CD8-positive, alpha-beta T cell (primary cell): ENCODE measurements at regions of chr22 and their contacts with region 1.

Region 1: DNA sequence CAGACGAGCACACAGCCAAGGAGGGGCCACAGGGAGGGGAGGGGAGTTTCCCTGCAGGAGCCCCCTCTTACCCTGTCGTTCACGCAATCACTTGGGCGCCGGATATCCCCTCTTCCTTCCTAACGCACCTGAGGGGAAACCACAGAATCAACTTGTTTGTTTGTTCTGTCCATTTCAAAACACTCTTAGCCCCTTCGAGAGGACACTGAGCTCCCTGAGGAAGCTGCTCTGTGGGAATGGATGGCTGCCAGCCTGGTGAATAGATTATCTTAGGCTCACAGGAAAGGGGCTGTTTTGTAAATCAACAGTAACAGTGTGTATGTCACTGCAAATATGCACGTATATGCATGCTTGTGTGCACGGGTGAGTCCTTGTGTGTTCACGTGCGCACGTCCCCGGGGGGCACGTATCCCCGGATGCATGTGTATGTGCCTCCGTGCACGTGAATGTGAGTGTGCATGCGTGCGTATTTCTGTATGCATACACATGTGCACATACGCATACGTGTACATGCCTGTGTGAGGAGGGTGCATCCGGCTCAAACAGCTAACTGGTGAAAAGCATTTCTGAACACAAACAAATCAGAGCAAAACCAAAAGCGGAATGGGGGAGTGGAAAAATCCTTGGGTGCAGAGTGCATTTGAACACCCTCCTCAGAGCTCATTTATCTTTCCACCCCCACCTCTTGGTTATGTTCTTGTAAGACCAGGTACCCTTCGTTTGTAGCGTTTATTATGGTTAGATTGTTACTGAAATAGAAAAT is 7.2 kb downstream of the ARSA start:
- DNase-seq: peak; percentile 80 to 97 (median 91)
- ATAC-seq: peak; percentile 72
- H3K4me3 ChIP-seq: peak overlapping the region; percentile 41 to 50
- H3K4me3 Mint-ChIP-seq: peak overlapping the region; percentile 82
- H3K27ac ChIP-seq: peak overlapping the region; percentile 91
- H3K27ac Mint-ChIP-seq: peak overlapping the region; percentile 100
- H3K4me1 ChIP-seq: peaks cover 28% of the 10 kb centered on the region
- H3K4me1 Mint-ChIP-seq: peaks cover 34% of the 10 kb centered on the region
- H3K27me3 ChIP-seq: no peaks in the 10 kb centered on the region
- H3K27me3 Mint-ChIP-seq: no peaks in the 10 kb centered on the region
- CTCF ChIP-seq: no peak

Region 2: DNA sequence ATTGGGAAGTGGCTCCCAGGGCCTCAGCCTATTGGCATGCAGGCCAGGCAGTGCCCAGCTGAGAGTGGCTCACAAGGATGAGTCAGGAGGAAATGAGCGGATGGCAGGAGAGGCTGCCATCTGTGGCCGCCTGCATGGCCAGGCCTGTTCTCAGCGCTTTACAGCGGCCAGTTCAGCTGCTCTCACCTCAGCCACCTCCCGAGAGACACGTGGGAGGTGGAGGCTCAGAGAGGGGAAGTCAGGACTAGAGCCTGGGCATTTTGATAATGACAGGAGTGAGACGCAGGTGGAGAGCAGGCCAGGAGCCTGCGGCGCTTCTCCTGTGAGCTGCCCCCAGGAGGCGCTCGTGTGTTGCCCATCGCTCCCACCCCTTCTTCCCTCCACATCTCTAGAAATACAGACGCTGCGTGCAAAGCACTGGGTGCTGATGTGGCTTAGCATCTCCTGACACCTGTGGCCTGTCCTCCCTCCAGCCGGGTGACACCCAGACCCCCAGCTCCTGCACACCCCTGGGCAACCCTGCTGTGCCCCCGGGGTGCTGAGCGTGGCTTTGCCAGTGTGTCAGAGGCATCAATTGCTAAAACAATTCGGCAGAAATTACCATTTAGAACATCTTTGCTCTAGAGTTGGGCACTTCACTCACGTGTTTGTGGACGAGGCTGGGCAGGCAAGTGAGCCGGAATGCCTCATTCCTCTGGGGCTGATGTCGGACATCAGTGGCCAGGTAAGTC is 471.6 kb before region 1 on chr22:
- CTCF ChIA-PET with region 1: no interaction called
- POLR2A ChIA-PET with region 1: no interaction called
- intact Hi-C with region 1: loop called in 1 of 2 experiments (anchors 2 kb)
- DNase-seq: peak; percentile 59 to 87 (median 74)
- ATAC-seq: peak; percentile 99
- H3K4me3 ChIP-seq: no peak overlapping the region
- H3K4me3 Mint-ChIP-seq: no peak overlapping the region
- H3K27ac ChIP-seq: no peak overlapping the region
- H3K27ac Mint-ChIP-seq: no peak overlapping the region
- H3K4me1 ChIP-seq: no peaks in the 10 kb centered on the region
- H3K4me1 Mint-ChIP-seq: peaks cover 4% of the 10 kb centered on the region
- H3K27me3 ChIP-seq: no peaks in the 10 kb centered on the region
- H3K27me3 Mint-ChIP-seq: no peaks in the 10 kb centered on the region
- CTCF ChIP-seq: peak; percentile 82

Region 3: GRCh38 chr22:50244420-50245213 is 376.2 kb before region 1 on chr22 and contains the start of gene TUBGCP6:
- CTCF ChIA-PET with region 1: interaction called, 9 read pairs
- POLR2A ChIA-PET with region 1: interaction called, 13 read pairs
- intact Hi-C with region 1: loop called (anchors 1 to 2 kb)
- DNase-seq: peak; percentile 77 to 96 (median 91)
- ATAC-seq: peak; percentile 77
- H3K4me3 ChIP-seq: peak within 1 kb of the TSS; percentile 99
- H3K4me3 Mint-ChIP-seq: peak within 1 kb of the TSS; percentile 100
- H3K27ac ChIP-seq: peak within 1 kb of the TSS; percentile 94 to 99
- H3K27ac Mint-ChIP-seq: peak within 1 kb of the TSS; percentile 100
- H3K4me1 ChIP-seq: peaks cover 56% of the 10 kb centered on the region
- H3K4me1 Mint-ChIP-seq: peaks cover 51% of the 10 kb centered on the region
- H3K27me3 ChIP-seq: no peaks in the 10 kb centered on the region
- H3K27me3 Mint-ChIP-seq: no peaks in the 10 kb centered on the region
- CTCF ChIP-seq: peak; percentile 27
- total RNA-seq, gene TUBGCP6: 121 to 122 TPM

Region 4: DNA sequence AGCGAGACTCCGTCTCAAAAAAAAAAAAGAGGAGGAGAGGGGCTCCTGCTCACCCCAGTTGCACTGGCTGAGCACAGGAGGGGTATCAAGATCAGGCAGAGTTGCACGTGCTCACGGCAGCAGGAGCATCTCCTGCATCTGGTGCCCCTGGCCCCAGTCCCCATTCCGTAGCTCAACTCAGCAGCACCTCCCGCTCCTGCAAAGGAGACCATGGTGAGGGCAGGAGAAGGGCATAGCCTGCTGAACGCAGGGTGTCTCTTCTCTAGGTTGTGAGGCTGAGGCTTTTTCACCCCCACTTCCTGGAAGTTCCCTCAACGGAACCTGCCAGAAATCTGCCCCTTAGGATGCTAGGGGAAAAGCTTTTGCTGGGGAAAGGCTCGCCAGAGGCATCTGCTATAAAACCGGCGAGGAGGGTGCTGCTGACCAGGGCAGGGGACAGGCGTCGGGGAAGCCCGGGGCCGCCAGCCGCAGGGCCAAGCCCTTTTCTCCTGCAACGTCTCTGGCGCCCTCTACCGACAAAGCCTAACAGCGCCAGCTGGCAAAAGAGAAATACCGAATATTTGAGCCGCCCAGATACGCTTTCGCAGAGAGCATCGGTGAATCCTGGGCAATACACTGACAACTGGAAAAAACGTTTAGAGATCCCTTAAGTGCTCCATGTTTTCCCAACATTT is 278.7 kb before region 1 on chr22:
- CTCF ChIA-PET with region 1: no interaction called
- POLR2A ChIA-PET with region 1: no interaction called
- intact Hi-C with region 1: loop called (anchors 1 to 2 kb)
- DNase-seq: peak; percentile 78 to 92 (median 88)
- ATAC-seq: peak; percentile 49
- H3K4me3 ChIP-seq: peak overlapping the region; percentile 59 to 60
- H3K4me3 Mint-ChIP-seq: peak overlapping the region; percentile 84
- H3K27ac ChIP-seq: peak overlapping the region; percentile 62 to 77
- H3K27ac Mint-ChIP-seq: peak overlapping the region; percentile 92
- H3K4me1 ChIP-seq: peaks cover 23% of the 10 kb centered on the region
- H3K4me1 Mint-ChIP-seq: peaks cover 12% of the 10 kb centered on the region
- H3K27me3 ChIP-seq: peaks cover 0 to 8% of the 10 kb centered on the region in 2 experiments
- H3K27me3 Mint-ChIP-seq: no peaks in the 10 kb centered on the region
- CTCF ChIP-seq: peak; percentile 88

Region 5: DNA sequence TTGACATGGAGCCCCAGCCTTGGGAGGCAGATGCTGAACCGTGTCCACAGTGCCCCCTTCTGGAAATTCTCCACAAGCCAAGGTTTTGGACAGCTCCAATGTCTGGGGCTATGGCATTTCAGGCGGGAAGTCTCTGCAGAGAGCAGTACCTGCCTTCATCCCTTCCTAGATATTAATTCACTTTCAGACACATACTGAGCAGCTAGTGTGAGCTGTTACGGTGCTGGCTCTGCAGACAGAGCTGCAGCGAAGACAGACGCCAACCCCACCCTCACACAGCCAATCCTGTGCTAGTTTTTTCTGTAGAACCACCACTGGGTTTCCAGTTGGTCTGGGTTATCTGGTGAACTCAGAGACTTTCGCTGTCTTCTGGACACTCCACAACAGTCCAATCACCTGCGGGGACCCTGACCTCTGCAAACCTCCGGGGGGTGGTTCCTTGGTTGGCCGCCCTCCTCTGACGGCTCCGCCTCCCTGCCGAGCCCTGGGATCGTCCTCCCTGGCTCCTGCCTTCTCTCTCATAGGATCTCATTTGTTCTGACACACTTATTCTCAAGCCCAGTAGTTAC is 122.4 kb before region 1 on chr22:
- CTCF ChIA-PET with region 1: interaction called, 10 read pairs
- POLR2A ChIA-PET with region 1: no interaction called
- intact Hi-C with region 1: no loop called
- DNase-seq: peak; percentile 41 to 84 (median 76)
- ATAC-seq: peak; percentile 99
- H3K4me3 ChIP-seq: no peak overlapping the region
- H3K4me3 Mint-ChIP-seq: no peak overlapping the region
- H3K27ac ChIP-seq: no peak overlapping the region
- H3K27ac Mint-ChIP-seq: no peak overlapping the region
- H3K4me1 ChIP-seq: no peaks in the 10 kb centered on the region
- H3K4me1 Mint-ChIP-seq: no peaks in the 10 kb centered on the region
- H3K27me3 ChIP-seq: no peaks in the 10 kb centered on the region
- H3K27me3 Mint-ChIP-seq: no peaks in the 10 kb centered on the region
- CTCF ChIP-seq: peak; percentile 63

Region 6: DNA sequence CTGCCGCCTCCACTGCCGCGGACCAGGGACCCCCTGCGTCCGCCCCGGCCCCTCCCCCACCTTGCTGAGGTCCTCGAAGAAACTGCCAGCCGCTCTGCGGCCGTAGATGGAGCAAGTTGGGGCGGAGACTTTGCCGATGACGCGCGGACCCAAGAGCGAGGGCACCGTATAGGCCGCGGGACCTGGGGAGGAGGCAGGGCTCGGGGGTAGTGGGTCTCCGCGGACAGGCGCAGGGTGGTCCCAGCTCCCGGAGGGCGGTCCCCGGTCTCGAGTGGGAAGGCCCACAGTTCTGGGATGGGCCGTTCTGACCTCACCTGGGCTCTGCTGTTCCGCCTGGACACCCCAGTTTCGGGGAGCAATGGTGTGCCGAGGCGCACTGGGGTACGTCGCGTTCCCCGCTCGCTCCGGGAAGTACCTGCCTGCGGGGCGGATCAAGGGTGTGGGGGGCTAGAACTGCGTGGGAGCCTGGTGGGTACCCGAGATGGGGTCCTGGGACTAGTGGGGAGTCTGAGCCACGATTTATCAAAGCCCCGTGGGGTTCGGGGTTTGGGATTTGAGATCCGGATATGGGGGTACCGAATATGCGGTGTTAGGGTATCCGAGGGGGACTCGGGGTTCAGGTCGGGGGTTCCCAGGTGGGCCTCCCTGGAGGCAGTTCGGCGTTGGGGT is 89.8 kb before region 1 on chr22:
- CTCF ChIA-PET with region 1: interaction called, 25 read pairs
- POLR2A ChIA-PET with region 1: interaction called, 61 read pairs
- intact Hi-C with region 1: loop called in 1 of 2 experiments (anchors 1 kb)
- DNase-seq: peak; percentile 67 to 89 (median 75)
- ATAC-seq: peak; percentile 52
- H3K4me3 ChIP-seq: peak overlapping the region; percentile 64 to 70
- H3K4me3 Mint-ChIP-seq: peak overlapping the region; percentile 87
- H3K27ac ChIP-seq: peak overlapping the region; percentile 81 to 95
- H3K27ac Mint-ChIP-seq: peak overlapping the region; percentile 96
- H3K4me1 ChIP-seq: peaks cover 31% of the 10 kb centered on the region
- H3K4me1 Mint-ChIP-seq: peaks cover 25% of the 10 kb centered on the region
- H3K27me3 ChIP-seq: peaks cover 0 to 2% of the 10 kb centered on the region in 2 experiments
- H3K27me3 Mint-ChIP-seq: peaks cover 8% of the 10 kb centered on the region
- CTCF ChIP-seq: no peak

Region 7: GRCh38 chr22:50562523-50563412 is 58.0 kb before region 1 on chr22 and contains the start of gene SYCE3:
- CTCF ChIA-PET with region 1: interaction called, 11 read pairs
- POLR2A ChIA-PET with region 1: interaction called, 13 read pairs
- intact Hi-C with region 1: loop called (anchors 1 kb)
- DNase-seq: peak; percentile 93 to 98 (median 97)
- ATAC-seq: peak; percentile 98
- H3K4me3 ChIP-seq: peak within 1 kb of the TSS; percentile 57 to 67
- H3K4me3 Mint-ChIP-seq: peak within 1 kb of the TSS; percentile 94
- H3K27ac ChIP-seq: peak within 1 kb of the TSS; percentile 17 to 47
- H3K27ac Mint-ChIP-seq: peak within 1 kb of the TSS; percentile 91
- H3K4me1 ChIP-seq: peaks cover 10% of the 10 kb centered on the region
- H3K4me1 Mint-ChIP-seq: peaks cover 20% of the 10 kb centered on the region
- H3K27me3 ChIP-seq: no peaks in the 10 kb centered on the region
- H3K27me3 Mint-ChIP-seq: no peaks in the 10 kb centered on the region
- CTCF ChIP-seq: peak; percentile 91
- total RNA-seq, gene SYCE3: not detected